Activated T-helper 2 cell treated with anti-CD3 and anti-CD28 coated beads, Interferon-gamma antibody, Interleukin-2, Interleukin-4, amounts not matched to agents 10 μg/mL and 5 μg/mL and 100 μg/mL, durations not matched to agents 14 hours and 24 hours and 36 hours (primary cell): ENCODE measurements at regions of chr18 and their contacts with region 1.

Region 1: GRCh38 chr18:62209046-62209445 is 22.0 kb downstream of the RELCH start:
- DNase-seq: no peak
- H3K4me3 Mint-ChIP-seq: no peak overlapping the region
- H3K27ac Mint-ChIP-seq: no peak overlapping the region
- H3K4me1 Mint-ChIP-seq: peaks cover 14% of the 10 kb centered on the region
- H3K27me3 Mint-ChIP-seq: no peaks in the 10 kb centered on the region

Region 2: DNA sequence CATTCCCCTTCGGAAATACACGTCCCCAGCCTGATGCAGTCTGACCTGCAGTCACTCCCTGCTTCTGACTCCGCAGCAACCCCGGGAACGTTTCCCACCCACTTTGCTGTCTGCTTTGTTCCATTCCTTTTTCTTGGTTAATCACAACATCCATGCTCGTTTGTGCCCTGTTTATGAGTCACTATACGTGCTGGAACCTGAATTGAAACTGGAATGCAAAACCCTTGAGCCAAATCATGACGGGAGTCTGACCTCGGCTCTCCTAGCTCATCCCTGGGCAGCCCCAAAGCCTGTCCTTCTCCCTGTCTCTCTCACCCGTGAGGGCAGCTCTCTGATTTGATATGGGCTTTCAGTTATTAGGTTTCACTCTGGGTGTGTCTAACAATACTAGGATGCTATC is 259.1 kb before region 1 on chr18:
- intact Hi-C with region 1: no loop called
- DNase-seq: no peak
- H3K4me3 Mint-ChIP-seq: no peak overlapping the region
- H3K27ac Mint-ChIP-seq: no peak overlapping the region
- H3K4me1 Mint-ChIP-seq: peaks cover 30% of the 10 kb centered on the region
- H3K27me3 Mint-ChIP-seq: peaks cover 58% of the 10 kb centered on the region

Region 3: GRCh38 chr18:62018034-62018758 is 190.8 kb before region 1 on chr18:
- intact Hi-C with region 1: no loop called
- DNase-seq: no peak
- H3K4me3 Mint-ChIP-seq: no peak overlapping the region
- H3K27ac Mint-ChIP-seq: no peak overlapping the region
- H3K4me1 Mint-ChIP-seq: peaks cover 2% of the 10 kb centered on the region
- H3K27me3 Mint-ChIP-seq: peaks cover 20% of the 10 kb centered on the region

Region 4: DNA sequence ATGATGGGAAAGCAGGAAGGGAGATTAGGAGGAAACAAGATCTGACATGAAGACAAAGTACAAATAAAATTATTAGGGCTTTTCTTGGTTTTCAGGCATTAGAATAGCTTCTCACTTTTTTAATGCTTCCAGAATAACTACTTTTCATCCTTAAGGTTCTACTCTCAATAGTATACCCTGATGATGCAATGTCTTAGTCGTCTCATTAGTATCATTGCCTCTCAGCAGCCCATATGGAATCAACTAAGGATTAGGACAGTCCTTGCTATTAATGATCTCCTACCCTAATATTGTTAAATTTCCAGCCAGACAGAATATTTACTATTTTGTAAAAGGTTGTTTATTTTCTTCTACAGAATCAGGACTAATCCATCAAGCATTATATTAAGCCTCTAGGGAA is 33.9 kb after region 1 on chr18:
- intact Hi-C with region 1: loop called (anchors 5 kb)
- DNase-seq: no peak
- H3K4me3 Mint-ChIP-seq: no peak overlapping the region
- H3K27ac Mint-ChIP-seq: no peak overlapping the region
- H3K4me1 Mint-ChIP-seq: peaks cover 5% of the 10 kb centered on the region
- H3K27me3 Mint-ChIP-seq: no peaks in the 10 kb centered on the region